ENCODE measurements at regions of chr6 and their contacts with region 1.

Region 1: DNA sequence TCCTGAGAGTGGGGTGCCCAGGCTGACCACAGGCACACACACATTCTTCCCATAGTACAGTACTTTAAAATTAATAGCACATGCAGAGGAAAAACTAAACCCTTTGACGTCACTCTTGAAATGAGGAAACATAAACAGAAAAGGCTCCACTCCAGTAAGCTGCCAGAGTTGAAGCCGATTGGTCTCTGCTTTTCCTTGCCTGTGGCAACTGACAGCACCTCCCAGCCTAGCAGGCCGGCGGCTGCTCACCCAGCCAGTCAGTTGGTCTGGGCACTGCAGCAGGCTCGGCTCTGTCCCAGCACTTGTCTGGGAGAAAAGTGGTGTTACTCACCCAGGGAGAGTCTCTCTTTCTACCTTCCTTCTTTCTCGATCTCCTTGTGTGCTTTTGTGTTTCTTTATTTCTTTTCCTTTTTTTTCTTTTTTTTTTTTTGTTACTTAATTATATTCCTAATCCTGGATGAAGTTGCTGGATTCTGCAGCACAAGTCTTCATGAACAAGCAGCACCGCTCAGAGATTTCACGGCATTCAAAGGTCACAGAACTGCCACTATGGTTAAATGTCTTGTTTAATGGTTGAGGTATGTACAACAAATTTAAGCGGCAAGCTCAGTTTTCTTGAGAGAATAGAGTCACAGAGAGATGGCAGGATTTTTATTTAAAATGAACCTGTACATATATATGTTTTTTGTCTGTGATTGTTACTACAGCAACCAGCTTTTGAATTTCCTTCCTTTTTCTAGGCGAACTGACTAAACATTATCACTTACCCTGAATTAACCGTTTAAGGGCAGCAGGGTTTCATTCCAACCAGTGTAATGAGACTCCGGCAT is at the start of gene PDE7B:
- DNase-seq: peak; percentile 99
- ATAC-seq: peak; percentile 99
- H3K4me3 ChIP-seq: peak within 1 kb of the TSS; percentile 65
- H3K27ac ChIP-seq: peak within 1 kb of the TSS; percentile 98
- H3K4me1 ChIP-seq: peaks cover 11% of the 10 kb centered on the region
- H3K27me3 ChIP-seq: no peaks in the 10 kb centered on the region
- CTCF ChIP-seq: no peak
- POLR2A ChIP-seq: peak; percentile 99
- RAD21 ChIP-seq: peak; percentile 30; the same call in 1 of the 2 replicates
- total RNA-seq, gene PDE7B: 12.4 and 15.6 TPM in 2 replicates

Region 2: DNA sequence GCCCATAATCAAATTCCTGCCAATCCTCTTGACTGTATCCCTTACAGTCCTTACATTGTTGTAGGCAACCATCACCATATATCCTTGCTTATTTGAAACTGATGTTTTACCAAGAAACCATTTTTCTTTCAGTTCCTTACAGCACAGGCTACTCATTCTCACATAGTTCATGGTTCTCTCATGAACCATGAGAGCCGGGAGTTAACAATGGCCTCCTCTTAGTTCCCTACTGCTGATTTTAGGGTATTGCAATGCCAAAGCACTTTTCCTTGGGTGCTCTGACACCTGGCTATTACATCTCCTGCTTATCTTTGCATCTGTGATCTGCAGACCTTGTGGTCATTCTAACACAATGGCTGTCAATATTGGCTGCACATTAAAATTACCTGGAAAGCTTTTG is 537.1 kb before region 1 on chr6:
- CTCF ChIA-PET with region 1: no interaction called
- POLR2A ChIA-PET with region 1: no interaction called
- dilution Hi-C with region 1: no loop called
- in situ Hi-C with region 1: no loop called
- intact Hi-C with region 1: no loop called
- DNase-seq: no peak
- ATAC-seq: no peak
- H3K4me3 ChIP-seq: no peak overlapping the region
- H3K27ac ChIP-seq: no peak overlapping the region
- H3K4me1 ChIP-seq: no peaks in the 10 kb centered on the region
- H3K27me3 ChIP-seq: no peaks in the 10 kb centered on the region
- CTCF ChIP-seq: no peak
- POLR2A ChIP-seq: no peak
- RAD21 ChIP-seq: no peak

Region 3: DNA sequence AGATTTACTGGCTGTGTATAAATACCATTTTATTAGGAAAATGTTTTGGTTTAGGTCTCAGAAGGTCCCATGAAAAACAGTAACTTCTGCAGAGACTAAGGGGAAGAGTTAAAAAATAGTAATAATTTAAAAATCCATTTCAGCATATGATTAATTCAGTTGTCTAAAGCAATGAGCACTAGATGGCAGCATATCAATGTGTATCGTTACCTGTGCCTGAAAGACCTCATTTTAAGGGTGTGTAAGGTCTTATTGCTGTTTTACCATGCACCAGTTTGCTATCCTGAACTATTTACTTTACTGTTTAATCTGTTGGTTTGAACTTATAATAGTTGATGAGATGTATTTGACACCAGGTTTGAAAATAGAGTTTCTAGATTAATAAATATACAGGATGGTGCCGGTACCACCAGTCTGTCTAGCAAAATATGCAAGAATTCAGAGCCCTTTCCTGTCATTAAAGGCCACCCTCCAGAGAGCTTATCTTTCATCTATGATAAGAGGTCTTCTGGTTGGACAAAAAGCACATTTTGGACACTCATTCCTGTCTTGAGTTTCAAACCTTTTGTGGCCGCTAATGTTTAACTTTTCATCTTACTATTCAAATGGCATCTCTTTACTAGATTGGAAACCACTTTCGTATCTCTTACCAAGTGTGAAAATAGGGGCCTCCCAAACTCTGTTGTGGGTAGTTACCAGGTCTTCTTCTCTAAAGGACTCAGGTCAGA is 345.2 kb before region 1 on chr6:
- CTCF ChIA-PET with region 1: no interaction called
- POLR2A ChIA-PET with region 1: no interaction called
- dilution Hi-C with region 1: no loop called
- in situ Hi-C with region 1: no loop called
- intact Hi-C with region 1: loop called (anchors 5 kb)
- DNase-seq: peak; percentile 74
- ATAC-seq: peak; percentile 86
- H3K4me3 ChIP-seq: no peak overlapping the region
- H3K27ac ChIP-seq: no peak overlapping the region
- H3K4me1 ChIP-seq: peaks cover 2% of the 10 kb centered on the region; the same call in 1 of the 2 replicates
- H3K27me3 ChIP-seq: no peaks in the 10 kb centered on the region
- CTCF ChIP-seq: peak; percentile 68
- POLR2A ChIP-seq: no peak
- RAD21 ChIP-seq: peak; percentile 85

Region 4: GRCh38 chr6:135535989-135536414 is 315.7 kb before region 1 on chr6:
- CTCF ChIA-PET with region 1: no interaction called
- POLR2A ChIA-PET with region 1: no interaction called
- dilution Hi-C with region 1: no loop called
- in situ Hi-C with region 1: no loop called
- intact Hi-C with region 1: loop called (anchors 1 kb)
- DNase-seq: peak; percentile 98
- ATAC-seq: peak; percentile 85
- H3K4me3 ChIP-seq: no peak overlapping the region
- H3K27ac ChIP-seq: peak overlapping the region; percentile 24
- H3K4me1 ChIP-seq: peaks cover 9% of the 10 kb centered on the region
- H3K27me3 ChIP-seq: no peaks in the 10 kb centered on the region
- CTCF ChIP-seq: peak; percentile 80
- POLR2A ChIP-seq: no peak
- RAD21 ChIP-seq: peak; percentile 83

Region 5: DNA sequence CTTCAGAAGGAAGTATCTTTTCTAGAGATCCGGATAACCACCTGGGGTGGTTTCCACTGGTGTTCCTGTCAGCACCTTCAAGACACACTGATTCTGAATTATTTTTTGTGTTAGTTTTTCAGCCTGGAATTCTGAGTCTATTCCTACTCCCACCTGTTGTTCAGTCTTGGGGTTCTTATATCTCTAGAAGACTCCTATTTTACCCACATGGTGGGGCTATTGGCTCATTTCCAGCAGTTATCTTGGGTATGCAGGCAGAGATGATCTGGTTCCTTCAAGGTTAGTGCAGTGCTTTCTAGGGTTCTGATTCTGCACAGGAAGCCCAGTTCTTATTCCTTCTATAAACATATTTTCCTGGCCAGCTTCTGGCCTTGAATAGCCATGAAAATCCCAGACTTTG is 175.8 kb before region 1 on chr6:
- CTCF ChIA-PET with region 1: no interaction called
- POLR2A ChIA-PET with region 1: no interaction called
- dilution Hi-C with region 1: no loop called
- in situ Hi-C with region 1: no loop called
- intact Hi-C with region 1: loop called (anchors 2 kb)
- DNase-seq: peak; percentile 41
- ATAC-seq: no peak
- H3K4me3 ChIP-seq: no peak overlapping the region
- H3K27ac ChIP-seq: no peak overlapping the region
- H3K4me1 ChIP-seq: peaks cover 8% of the 10 kb centered on the region
- H3K27me3 ChIP-seq: no peaks in the 10 kb centered on the region
- CTCF ChIP-seq: 0 out of 2 replicates have a peak, but pooled peaks have one; percentile 22
- POLR2A ChIP-seq: no peak
- RAD21 ChIP-seq: peak; percentile 41

Region 6: GRCh38 chr6:135901774-135902524 is 50.3 kb after region 1 on chr6:
- CTCF ChIA-PET with region 1: no interaction called
- POLR2A ChIA-PET with region 1: no interaction called
- dilution Hi-C with region 1: no loop called
- in situ Hi-C with region 1: no loop called
- intact Hi-C with region 1: loop called (anchors 1 kb)
- DNase-seq: peak; percentile 96
- ATAC-seq: peak; percentile 45
- H3K4me3 ChIP-seq: peak overlapping the region; percentile 24; the same call in 1 of the 2 replicates
- H3K27ac ChIP-seq: peak overlapping the region; percentile 97; the same call in 1 of the 2 replicates
- H3K4me1 ChIP-seq: peaks cover 24% of the 10 kb centered on the region
- H3K27me3 ChIP-seq: no peaks in the 10 kb centered on the region
- CTCF ChIP-seq: no peak
- POLR2A ChIP-seq: no peak
- RAD21 ChIP-seq: no peak

Region 7: DNA sequence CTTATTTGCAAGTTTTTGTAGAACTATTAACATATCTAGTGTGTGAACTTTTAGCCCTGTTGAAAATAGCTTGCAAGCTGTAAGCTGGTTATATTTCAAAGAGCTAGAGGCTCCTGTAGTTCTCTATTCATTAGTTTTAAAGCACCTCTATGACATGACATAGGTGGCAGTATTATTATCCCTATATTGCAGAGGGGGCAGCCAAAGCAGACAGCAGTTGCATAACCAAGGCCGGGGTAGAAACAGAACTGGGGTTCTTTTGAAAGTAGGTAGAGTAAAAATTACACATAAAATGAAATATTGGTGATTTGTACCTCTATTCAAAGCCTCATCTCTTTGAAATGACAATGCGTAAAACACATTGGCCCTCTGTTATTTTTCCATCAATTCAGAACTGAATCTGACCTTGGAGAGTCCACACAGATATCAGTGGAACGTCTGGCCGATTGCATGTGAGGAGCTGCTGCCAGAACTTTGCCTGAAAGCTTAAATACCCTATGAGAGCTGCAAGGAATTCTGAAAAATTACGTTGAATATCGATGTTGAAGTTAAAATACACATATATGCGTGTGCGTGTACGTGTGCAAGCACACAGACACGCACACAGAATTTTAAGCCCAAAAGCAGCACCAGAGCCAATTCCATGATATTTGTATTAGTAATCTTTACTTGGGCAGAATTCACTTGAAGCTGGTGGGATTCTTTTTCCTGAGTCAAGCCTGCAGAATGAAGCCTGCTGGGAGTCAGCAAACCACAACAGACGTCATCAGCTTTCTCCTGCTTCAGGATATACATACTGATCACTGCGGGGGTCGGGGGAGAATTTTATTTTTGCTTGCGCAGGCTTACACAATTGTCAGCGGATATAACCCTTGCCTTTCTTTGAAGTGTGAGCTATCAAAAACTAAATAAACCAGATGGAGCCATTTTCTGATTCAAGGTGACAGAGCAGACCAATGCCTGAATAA is 163.1 kb after region 1 on chr6:
- CTCF ChIA-PET with region 1: no interaction called
- POLR2A ChIA-PET with region 1: no interaction called
- dilution Hi-C with region 1: no loop called
- in situ Hi-C with region 1: no loop called
- intact Hi-C with region 1: loop called (anchors 1 kb)
- DNase-seq: peak; percentile 100
- ATAC-seq: peak; percentile 81
- H3K4me3 ChIP-seq: no peak overlapping the region
- H3K27ac ChIP-seq: peak overlapping the region; percentile 99
- H3K4me1 ChIP-seq: peaks cover 23% of the 10 kb centered on the region
- H3K27me3 ChIP-seq: no peaks in the 10 kb centered on the region
- CTCF ChIP-seq: no peak
- POLR2A ChIP-seq: peak; percentile 78
- RAD21 ChIP-seq: peak; percentile 22

Region 8: GRCh38 chr6:136037876-136038460 is 186.3 kb after region 1 on chr6:
- CTCF ChIA-PET with region 1: no interaction called
- POLR2A ChIA-PET with region 1: no interaction called
- dilution Hi-C with region 1: no loop called
- in situ Hi-C with region 1: no loop called
- intact Hi-C with region 1: loop called (anchors 5 kb)
- DNase-seq: peak; percentile 72
- ATAC-seq: peak; percentile 55
- H3K4me3 ChIP-seq: peak overlapping the region; percentile 88
- H3K27ac ChIP-seq: peak overlapping the region; percentile 98
- H3K4me1 ChIP-seq: peaks cover 24% of the 10 kb centered on the region
- H3K27me3 ChIP-seq: no peaks in the 10 kb centered on the region
- CTCF ChIP-seq: peak; percentile 40
- POLR2A ChIP-seq: peak; percentile 45; the same call in 1 of the 2 replicates
- RAD21 ChIP-seq: no peak; the same call in 1 of the 2 replicates